Activated CD4-positive, alpha-beta memory T cell treated with anti-CD3 and anti-CD28 coated beads, Interleukin-2, amount 10 ng/mL, durations not matched to agents 7 days and 5 days (primary cell): ENCODE measurements at regions of chr17 and their contacts with region 1.

Region 1: DNA sequence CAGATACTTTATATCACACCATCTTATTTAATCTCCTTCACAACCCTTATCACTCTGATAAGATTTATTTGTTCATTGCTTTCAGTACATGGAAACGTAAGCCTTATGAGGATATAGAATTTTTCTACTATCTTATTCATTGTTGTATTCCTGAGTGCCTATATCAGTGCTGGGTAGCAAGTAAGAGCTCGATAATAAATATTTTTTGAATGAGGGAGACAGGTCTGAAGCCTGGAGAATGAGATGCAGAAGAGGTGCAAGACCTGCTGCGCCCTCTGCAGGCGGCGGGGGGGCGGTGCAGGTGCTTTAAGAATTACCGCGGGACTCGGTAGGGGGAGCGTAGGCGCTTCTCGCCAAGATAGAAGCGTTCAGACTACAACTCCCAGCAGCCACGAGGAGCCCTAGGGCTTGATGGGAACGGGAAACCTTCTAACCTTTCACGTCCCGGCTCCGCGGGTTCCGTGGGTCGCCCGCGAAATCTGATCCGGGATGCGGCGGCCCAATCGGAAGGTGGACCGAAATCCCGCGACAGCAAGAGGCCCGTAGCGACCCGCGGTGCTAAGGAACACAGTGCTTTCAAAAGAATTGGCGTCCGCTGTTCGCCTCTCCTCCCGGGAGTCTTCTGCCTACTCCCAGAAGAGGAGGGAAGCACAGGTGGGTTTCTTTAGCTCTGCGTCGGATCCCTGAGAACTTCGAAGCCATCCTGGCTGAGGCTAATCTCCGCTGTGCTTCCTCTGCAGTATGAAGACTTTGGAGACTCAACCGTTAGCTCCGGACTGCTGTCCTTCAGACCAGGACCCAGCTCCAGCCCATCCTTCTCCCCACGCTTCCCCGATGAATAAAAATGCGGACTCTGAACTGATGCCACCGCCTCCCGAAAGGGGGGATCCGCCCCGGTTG is at the start of gene WRAP53:
- DNase-seq: peak; percentile 97
- H3K4me3 Mint-ChIP-seq: peak within 1 kb of the TSS; percentile 94
- H3K27ac Mint-ChIP-seq: peak within 1 kb of the TSS; percentile 96
- H3K4me1 Mint-ChIP-seq: peaks cover 39% of the 10 kb centered on the region
- H3K27me3 Mint-ChIP-seq: no peaks in the 10 kb centered on the region
- total RNA-seq, gene WRAP53: 18.6 to 18.8 TPM

Region 2: DNA sequence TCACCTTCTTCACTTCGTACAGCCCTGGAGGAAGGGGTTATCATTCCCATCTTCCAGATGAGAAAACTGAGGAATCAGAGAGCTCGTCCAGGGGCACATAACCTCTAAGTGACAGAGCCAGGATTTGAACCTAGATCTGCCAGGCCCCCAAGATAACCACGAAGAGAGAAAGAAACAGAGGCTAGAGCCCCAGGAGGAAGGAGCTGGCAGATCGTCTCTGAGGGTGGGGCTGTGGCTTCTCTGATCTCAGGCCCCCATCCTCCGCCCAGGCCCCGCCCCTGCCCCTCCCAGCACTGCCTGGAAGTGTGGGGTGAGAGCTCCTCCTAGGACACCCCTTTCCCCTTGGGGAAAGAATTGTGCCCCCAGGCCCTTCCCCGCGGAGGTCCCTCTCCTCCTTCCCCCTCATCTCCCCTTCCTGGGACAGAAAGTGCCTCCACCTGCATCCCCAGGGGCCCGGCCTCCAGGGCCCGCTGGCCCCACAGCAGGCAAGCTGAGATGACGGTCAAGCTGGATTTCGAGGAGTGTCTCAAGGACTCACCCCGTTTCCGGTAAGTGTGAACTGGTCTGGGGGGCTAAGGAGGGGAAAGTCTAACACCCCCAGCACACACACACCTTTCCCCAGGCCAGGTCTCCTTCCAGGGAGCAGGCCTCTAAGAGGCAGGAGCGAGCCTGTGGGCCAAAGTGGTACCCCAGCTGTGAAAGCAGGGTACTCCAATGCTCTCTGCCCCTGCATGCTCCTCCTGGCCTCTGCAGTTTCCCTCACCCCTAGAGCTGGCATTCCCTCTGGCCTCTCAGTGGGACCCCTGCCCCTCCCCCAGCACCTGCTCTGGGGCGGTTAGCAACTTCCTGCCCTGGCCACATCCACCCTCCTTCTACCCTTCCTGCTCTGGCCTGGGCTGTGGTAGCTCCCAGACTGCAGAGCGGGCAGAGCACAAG is 351.6 kb before region 1 on chr17 and contains the start of gene ACAP1:
- CTCF ChIA-PET with region 1: no interaction called
- POLR2A ChIA-PET with region 1: interaction called, 28 read pairs
- DNase-seq: peak; percentile 93
- H3K4me3 Mint-ChIP-seq: peak within 1 kb of the TSS; percentile 91
- H3K27ac Mint-ChIP-seq: peak within 1 kb of the TSS; percentile 91
- H3K4me1 Mint-ChIP-seq: peaks cover 59% of the 10 kb centered on the region
- H3K27me3 Mint-ChIP-seq: no peaks in the 10 kb centered on the region
- total RNA-seq, gene ACAP1: 682 to 709 TPM

Region 3: DNA sequence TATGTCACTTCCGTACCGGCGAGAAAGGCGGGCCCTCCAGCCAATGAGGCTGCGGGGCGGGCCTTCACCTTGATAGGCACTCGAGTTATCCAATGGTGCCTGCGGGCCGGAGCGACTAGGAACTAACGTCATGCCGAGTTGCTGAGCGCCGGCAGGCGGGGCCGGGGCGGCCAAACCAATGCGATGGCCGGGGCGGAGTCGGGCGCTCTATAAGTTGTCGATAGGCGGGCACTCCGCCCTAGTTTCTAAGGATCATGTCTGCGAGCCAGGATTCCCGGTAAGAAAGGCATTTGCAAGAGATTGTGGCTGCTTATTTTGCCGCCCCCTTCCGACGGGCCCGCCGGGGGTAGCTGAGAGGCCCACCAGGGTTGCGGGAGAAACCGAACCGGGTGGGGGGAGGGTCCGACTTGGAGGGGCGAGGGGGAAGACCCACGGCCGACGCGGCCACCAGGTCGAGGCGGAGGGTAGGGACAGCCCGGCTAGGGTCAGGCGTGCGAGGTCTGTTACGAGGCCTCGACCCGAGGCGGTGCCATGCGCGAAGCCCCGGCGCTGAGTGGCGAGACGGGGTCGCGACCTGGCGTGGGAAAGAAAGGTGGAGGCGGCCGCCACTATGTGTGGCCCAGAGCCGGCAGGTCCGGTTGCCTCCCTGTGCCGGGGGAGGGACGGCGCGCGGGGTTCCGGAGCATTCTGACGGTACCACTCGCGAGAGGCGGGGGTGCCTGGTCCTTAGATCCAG is 115.4 kb before region 1 on chr17:
- CTCF ChIA-PET with region 1: interaction called, 12 read pairs
- POLR2A ChIA-PET with region 1: interaction called, 88 read pairs
- DNase-seq: peak; percentile 100
- H3K4me3 Mint-ChIP-seq: peak overlapping the region; percentile 93
- H3K27ac Mint-ChIP-seq: peak overlapping the region; percentile 99
- H3K4me1 Mint-ChIP-seq: peaks cover 63% of the 10 kb centered on the region
- H3K27me3 Mint-ChIP-seq: no peaks in the 10 kb centered on the region

Region 4: DNA sequence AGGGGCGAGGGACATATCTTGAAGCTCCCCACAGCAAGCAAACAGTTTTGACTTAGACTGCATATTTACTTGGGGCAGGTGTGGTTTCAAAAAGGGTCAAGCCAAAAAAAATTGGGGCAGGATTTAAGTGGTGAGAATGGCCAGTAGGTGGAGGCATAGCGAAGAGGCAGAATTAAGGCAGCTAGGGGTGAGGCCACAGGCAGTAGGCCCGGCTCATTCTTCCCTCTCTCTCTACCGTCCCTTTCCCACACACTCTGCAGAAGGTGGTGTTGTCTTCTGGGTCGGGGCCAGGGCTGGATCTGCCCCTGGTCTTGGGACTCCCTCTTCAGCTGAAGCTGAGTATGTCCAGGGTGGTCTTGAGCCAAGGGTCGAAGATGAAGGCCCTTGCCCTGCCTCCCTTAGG is 55.7 kb before region 1 on chr17:
- CTCF ChIA-PET with region 1: interaction called, 50 read pairs
- POLR2A ChIA-PET with region 1: interaction called, 63 read pairs
- DNase-seq: peak; percentile 47
- H3K4me3 Mint-ChIP-seq: no peak overlapping the region
- H3K27ac Mint-ChIP-seq: no peak overlapping the region
- H3K4me1 Mint-ChIP-seq: peaks cover 5% of the 10 kb centered on the region
- H3K27me3 Mint-ChIP-seq: no peaks in the 10 kb centered on the region

Region 5: GRCh38 chr17:7713782-7714181 is 25.6 kb after region 1 on chr17:
- CTCF ChIA-PET with region 1: interaction called, 8 read pairs
- POLR2A ChIA-PET with region 1: interaction called, 10 read pairs
- DNase-seq: no peak
- H3K4me3 Mint-ChIP-seq: no peak overlapping the region
- H3K27ac Mint-ChIP-seq: no peak overlapping the region
- H3K4me1 Mint-ChIP-seq: peaks cover 42% of the 10 kb centered on the region
- H3K27me3 Mint-ChIP-seq: peaks cover 60% of the 10 kb centered on the region

Region 6: DNA sequence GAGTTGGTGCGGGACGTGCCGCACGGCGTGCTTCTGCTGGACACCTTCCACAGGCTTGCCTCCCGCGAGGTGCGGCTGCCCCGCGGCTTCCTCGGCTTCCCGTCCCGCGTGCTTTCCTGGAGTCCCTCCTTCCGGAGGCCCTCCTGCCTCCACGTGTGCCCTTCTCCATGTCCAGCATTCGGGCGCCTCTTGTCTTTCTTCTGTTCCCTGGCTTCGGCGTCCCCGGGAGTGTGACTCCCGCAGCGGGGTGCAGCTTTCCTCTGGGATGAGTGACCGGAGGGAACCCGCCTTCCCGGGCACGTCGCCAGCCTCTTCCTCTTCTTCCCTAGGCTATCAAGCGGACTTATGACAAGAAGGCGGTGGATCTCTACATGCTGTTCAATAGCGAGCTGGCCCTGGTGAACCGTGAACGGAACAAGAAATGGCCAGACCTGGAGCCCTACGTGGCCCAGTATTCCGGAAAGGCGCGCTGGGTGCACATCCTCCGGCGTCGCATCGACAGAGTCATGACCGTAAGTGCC is 52.4 kb after region 1 on chr17:
- CTCF ChIA-PET with region 1: no interaction called
- POLR2A ChIA-PET with region 1: no interaction called
- DNase-seq: no peak
- H3K4me3 Mint-ChIP-seq: no peak overlapping the region
- H3K27ac Mint-ChIP-seq: no peak overlapping the region
- H3K4me1 Mint-ChIP-seq: no peaks in the 10 kb centered on the region
- H3K27me3 Mint-ChIP-seq: peaks cover 21% of the 10 kb centered on the region

Region 7: GRCh38 chr17:7774037-7774659 is 86.0 kb after region 1 on chr17:
- CTCF ChIA-PET with region 1: no interaction called
- POLR2A ChIA-PET with region 1: no interaction called
- DNase-seq: no peak
- H3K4me3 Mint-ChIP-seq: no peak overlapping the region
- H3K27ac Mint-ChIP-seq: no peak overlapping the region
- H3K4me1 Mint-ChIP-seq: no peaks in the 10 kb centered on the region
- H3K27me3 Mint-ChIP-seq: peaks cover 28% of the 10 kb centered on the region

Region 8: DNA sequence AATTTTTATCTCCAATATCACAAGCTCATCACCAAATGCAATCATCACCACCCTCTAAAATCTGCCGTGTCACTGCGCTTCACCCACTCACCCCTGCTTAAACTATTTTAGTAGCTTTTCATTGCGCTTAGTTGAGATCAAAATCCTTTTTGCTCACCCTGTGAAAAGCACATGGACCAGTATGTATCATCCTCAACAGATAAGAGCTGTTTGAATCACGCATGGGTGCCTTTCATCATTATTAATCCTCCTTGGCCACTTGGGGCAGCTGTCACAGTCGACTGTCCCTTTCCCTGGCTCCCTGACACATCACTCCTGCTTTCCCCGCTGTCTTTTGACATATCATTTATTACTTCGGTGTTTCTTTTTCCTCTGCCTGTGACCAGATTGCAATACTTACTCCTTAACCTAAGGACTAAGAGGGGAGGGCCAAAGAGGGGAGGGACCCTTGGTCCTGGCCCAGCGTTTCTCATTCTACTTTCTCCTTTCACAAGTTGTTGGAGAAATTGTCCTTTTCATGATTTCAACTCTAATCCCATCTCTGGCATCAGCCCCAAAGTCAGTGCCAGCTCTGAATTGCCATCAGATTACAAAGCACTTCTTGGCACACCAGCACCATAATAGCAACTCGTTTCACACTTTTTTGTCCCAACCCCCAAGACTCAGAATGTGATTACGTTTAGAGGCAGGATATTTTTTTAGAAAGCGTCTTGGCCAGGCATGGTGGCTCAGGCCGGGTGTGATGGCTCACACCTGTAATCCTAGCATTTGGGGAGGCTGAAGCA is 137.2 kb after region 1 on chr17:
- CTCF ChIA-PET with region 1: no interaction called
- POLR2A ChIA-PET with region 1: no interaction called
- DNase-seq: no peak
- H3K4me3 Mint-ChIP-seq: no peak overlapping the region
- H3K27ac Mint-ChIP-seq: no peak overlapping the region
- H3K4me1 Mint-ChIP-seq: no peaks in the 10 kb centered on the region
- H3K27me3 Mint-ChIP-seq: peaks cover 30% of the 10 kb centered on the region

Region 9: DNA sequence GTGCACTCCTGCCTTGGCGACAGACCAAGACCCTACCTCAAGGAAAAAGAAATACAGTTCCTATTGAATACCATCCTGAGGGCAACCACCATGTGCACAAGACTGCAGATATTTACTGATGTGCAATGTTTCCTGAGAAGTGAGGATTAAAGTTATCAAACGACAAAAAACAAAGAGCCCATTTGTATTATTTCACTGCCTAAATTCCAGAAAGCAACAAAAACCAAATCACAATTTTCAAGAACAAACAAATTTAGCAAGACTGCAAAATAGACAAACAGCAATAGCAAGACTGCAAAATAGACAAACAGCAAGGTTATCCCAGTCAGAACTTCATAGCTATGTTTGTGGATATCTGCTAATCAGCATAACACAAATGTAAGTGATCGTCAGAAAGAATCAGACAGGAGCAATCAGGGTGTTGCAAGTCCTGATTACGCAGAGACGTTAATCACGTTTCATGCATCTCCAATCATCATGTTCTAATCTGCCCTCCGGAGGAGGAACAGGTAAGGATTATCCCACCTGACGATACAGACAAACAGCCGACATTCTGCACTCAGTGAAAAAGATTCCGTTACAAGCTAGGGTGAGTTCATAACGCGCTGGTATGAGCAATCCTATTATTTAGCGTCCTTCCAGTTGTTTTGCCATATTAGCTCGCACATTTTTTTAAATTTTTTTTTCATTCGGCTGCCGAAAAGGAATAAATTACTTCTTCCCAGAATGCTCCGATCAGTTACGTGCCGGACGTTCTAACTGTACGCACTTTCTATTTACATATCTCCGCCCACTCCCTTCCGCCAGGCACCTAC is 485.1 kb after region 1 on chr17:
- CTCF ChIA-PET with region 1: no interaction called
- POLR2A ChIA-PET with region 1: interaction called, 10 read pairs
- DNase-seq: peak; percentile 84
- H3K4me3 Mint-ChIP-seq: peak overlapping the region; percentile 76
- H3K27ac Mint-ChIP-seq: peak overlapping the region; percentile 95
- H3K4me1 Mint-ChIP-seq: peaks cover 57% of the 10 kb centered on the region
- H3K27me3 Mint-ChIP-seq: no peaks in the 10 kb centered on the region